SK-N-SH (cell line): ENCODE measurements at regions of chr21 and their contacts with region 1.

Region 1: GRCh38 chr21:17900281-17900989 is 81.3 kb upstream of the C21orf91 start:
- DNase-seq: no peak
- H3K4me3 ChIP-seq: no peak overlapping the region
- H3K27ac ChIP-seq: no peak overlapping the region
- H3K4me1 ChIP-seq: no peaks in the 10 kb centered on the region
- H3K27me3 ChIP-seq: no peaks in the 10 kb centered on the region
- CTCF ChIP-seq: no peak
- EP300 ChIP-seq: no peak
- RAD21 ChIP-seq: no peak

Region 2: GRCh38 chr21:17679002-17679600 is 221.3 kb before region 1 on chr21:
- CTCF ChIA-PET with region 1: interaction called, 14 read pairs
- POLR2A ChIA-PET with region 1: no interaction called
- DNase-seq: peak; percentile 56
- H3K4me3 ChIP-seq: peak overlapping the region in 1 of 2 experiments; percentile 14; a peak in 1 of 4 replicates
- H3K27ac ChIP-seq: no peak overlapping the region
- H3K4me1 ChIP-seq: no peaks in the 10 kb centered on the region
- H3K27me3 ChIP-seq: no peaks in the 10 kb centered on the region
- CTCF ChIP-seq: peak; percentile 87
- EP300 ChIP-seq: no peak
- RAD21 ChIP-seq: peak; percentile 96

Region 3: DNA sequence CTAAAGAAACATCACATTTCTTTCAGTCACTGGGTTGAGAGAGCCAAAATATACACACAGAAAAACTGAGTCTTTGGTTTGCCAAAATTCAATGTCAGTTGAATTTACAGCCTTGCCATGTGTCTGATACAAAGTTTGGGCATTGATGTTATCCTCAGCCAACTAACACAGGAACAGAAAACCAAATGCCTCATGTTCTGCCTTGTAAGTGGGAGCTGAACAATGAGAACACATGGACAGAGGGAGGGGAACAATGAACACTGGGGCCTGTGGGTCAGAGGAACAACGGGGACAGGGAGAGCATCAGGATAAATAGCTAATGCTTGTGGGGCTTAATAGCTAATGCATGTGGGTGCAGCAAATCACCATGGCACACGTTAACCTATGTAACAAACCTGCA is 41.7 kb before region 1 on chr21:
- CTCF ChIA-PET with region 1: no interaction called
- POLR2A ChIA-PET with region 1: no interaction called
- DNase-seq: no peak
- H3K4me3 ChIP-seq: no peak overlapping the region
- H3K27ac ChIP-seq: no peak overlapping the region
- H3K4me1 ChIP-seq: no peaks in the 10 kb centered on the region
- H3K27me3 ChIP-seq: peaks cover 7% of the 10 kb centered on the region; the same call in 1 of the 2 replicates
- CTCF ChIP-seq: no peak
- EP300 ChIP-seq: no peak
- RAD21 ChIP-seq: no peak

Region 4: DNA sequence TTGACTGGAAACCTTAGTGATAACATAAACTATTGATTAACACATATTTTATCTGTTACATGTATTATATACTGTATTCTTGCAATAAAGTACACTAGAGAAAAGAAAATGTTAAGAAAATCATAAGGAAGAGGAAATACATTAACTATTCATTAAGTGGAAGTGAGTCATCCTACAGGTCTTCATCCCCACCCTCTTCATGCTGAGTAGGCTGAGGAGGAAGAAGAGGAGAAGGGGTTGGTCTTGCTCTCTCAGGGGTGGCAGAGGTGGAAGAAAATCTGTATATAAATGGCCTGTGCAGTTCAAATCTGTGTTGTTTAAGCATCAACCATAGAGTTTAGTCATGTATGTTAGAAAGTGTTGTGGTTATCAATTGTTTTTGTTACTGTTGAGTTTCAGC is 278.1 kb after region 1 on chr21:
- CTCF ChIA-PET with region 1: no interaction called
- POLR2A ChIA-PET with region 1: no interaction called
- DNase-seq: no peak
- H3K4me3 ChIP-seq: no peak overlapping the region
- H3K27ac ChIP-seq: no peak overlapping the region
- H3K4me1 ChIP-seq: no peaks in the 10 kb centered on the region
- H3K27me3 ChIP-seq: no peaks in the 10 kb centered on the region
- CTCF ChIP-seq: no peak
- EP300 ChIP-seq: no peak
- RAD21 ChIP-seq: no peak